ENCODE measurements at regions of chr1 and their contacts with region 1.

Region 1: DNA sequence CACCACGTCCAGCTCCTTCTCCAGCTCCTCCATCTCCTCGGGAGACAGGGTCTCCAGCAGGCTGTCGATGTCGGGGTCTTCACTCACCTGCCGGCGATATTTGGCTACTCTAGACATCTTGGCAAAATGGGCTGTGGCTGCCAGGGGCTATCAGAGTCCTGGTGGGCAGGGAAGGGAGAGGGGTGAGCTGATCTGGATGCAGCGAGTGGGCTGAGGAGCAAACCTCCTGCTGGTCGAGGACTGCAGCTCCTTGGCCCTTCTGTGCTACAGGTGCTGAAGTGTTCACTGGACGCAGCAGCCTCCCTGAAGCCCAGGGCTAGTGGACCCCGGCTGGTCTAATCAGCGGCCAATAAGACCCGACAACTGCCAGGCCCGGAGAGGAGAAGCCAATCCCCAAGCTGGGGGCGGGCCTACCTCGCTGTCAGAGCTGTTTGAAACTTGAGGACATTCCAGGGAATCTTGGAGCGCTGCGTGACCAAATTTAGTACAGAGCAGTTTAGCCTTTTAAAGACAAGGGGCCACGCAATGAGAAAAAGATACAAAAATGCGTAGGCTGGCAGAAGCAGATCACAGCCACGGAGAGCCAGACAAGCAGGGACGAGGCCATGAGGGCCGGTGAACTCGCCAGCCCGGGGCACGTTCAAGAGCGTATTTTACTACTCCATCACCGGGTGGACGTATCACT is at the start of gene LMOD1:
- DNase-seq: peak; percentile 95
- H3K4me3 ChIP-seq: peak within 1 kb of the TSS; percentile 85
- CTCF ChIP-seq: no peak

Region 2: DNA sequence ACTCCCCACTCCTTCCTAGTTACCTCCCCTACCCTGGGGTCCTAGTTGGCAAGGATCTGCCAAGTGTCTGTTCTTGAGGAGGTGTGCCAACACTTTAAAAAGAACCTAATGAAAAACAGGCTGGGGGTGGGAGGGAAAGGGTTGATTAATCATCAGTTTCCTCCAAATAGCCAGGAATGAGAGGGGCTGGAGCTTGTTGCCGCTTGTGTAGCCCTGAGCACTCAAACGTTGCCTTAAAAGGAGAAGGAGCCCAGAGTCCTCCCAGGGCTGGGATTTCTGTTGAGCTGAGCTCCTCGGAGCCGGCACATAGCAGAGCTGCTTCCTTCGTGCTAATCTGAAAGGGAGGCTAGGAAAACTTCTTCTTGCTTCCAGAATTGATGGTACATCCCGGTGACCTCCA is 41.8 kb before region 1 on chr1:
- CTCF ChIA-PET with region 1: interaction called, 63 read pairs
- POLR2A ChIA-PET with region 1: interaction called, 22 read pairs
- DNase-seq: peak; percentile 84
- H3K4me3 ChIP-seq: no peak overlapping the region
- CTCF ChIP-seq: no peak

Region 3: DNA sequence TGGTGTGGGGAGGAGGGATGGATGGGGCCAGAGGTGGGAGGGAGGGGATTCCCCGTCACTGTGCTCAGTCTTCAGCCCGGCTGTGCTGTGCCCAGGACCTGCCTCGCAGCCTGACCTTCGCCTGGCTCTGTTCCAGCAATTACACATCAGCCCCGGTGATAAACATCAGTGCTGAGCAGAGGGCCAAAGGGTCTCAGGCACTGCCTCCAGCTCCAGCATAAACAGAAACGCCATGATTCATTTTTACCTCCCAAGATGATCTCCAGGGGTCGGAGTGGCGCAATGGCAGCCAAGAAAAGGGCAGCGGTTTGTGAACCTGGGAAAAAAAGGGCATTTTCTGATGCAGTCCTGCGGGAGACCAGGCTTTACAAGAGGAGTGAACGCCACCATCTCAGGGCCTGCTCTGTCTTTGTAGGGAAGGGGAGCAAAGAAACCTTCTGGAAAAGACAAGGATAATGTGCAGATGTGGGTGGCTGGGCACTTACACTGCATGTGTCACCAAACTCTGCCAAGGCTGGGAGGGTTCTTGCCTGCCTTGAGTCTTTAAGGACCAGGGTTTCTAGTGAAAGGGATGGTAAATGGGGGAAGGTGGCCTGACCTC is 29.6 kb before region 1 on chr1:
- CTCF ChIA-PET with region 1: interaction called, 13 read pairs
- POLR2A ChIA-PET with region 1: interaction called, 10 read pairs
- DNase-seq: no peak
- H3K4me3 ChIP-seq: peak overlapping the region; percentile 3; the same call in 1 of the 2 replicates
- CTCF ChIP-seq: no peak

Region 4: DNA sequence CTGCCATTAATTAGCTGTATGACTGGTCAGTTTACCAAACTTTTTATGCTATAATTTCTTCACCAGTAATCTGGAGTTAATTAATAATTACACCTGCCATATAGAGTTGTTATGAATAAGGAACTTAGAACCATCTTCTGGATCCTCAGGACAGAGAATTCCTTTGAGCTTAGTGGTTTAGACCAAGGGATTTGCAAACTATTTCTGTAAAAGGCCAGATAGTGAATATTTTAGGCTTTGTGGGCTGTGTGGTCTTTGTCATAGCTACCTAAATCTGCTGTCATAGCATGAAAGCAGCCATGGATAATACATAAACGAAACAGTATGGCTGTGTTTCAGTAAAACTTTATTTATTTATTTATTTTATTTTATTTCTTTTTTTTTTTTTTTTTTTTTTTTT is 17.9 kb after region 1 on chr1:
- CTCF ChIA-PET with region 1: interaction called, 3 read pairs
- POLR2A ChIA-PET with region 1: interaction called, 13 read pairs
- DNase-seq: peak; percentile 73
- H3K4me3 ChIP-seq: no peak overlapping the region
- CTCF ChIP-seq: no peak

Measured in AG04449 (cell line).